Gastrocnemius medialis (tissue), 4 donors: ENCODE measurements at regions of chr5 and their contacts with region 1.

Region 1: GRCh38 chr5:54703133-54703532 is 185.6 kb downstream of the SNX18 start:
- DNase-seq: peak; percentile 17 to 49
- ATAC-seq: peak; percentile 79 to 80
- H3K4me3 ChIP-seq: no peak overlapping the region
- H3K27ac ChIP-seq: peak overlapping the region in 1 of 4 donors; percentile 39
- H3K4me1 ChIP-seq: peaks cover 22 to 28% of the 10 kb centered on the region in 2 donors
- H3K27me3 ChIP-seq: no peaks in the 10 kb centered on the region
- CTCF ChIP-seq: no peak
- POLR2A ChIP-seq: no peak

Region 2: DNA sequence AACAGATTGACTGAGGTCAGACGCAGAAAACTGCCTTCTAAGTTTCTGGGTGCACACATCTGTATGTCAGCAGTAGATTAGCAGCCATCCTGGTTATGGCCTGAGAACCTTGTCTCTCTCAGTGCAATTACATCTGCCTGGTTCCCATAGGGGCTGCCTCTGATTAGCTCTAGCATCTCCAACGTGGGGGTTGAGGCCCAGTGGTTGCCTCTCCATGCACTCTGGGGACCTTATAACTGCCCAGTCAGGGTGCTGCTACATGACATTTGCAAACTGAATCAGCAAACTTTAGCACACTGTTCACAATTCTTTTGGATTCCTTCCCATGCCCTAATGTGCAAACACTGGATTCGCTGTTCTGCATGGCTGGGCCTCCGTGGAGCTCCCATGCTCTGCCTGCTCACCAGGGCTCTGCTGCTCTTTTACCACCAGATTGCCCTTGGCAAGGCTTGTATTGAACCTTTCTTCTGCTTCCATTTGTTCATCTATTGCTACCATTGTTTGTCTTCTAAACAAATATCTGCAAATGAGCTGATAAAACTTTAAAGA is 149.4 kb before region 1 on chr5:
- in situ Hi-C with region 1: no loop called
- intact Hi-C with region 1: no loop called
- DNase-seq: no peak
- ATAC-seq: no peak
- H3K4me3 ChIP-seq: no peak overlapping the region
- H3K27ac ChIP-seq: no peak overlapping the region
- H3K4me1 ChIP-seq: no peaks in the 10 kb centered on the region
- H3K27me3 ChIP-seq: no peaks in the 10 kb centered on the region
- CTCF ChIP-seq: no peak
- POLR2A ChIP-seq: no peak

Region 3: GRCh38 chr5:54651482-54652076 is 51.6 kb before region 1 on chr5:
- in situ Hi-C with region 1: no loop called
- intact Hi-C with region 1: loop called (anchors 5 kb)
- DNase-seq: peak in 1 of 2 donors; percentile 38
- ATAC-seq: peak in 1 of 2 donors; percentile 31
- H3K4me3 ChIP-seq: no peak overlapping the region
- H3K27ac ChIP-seq: no peak overlapping the region
- H3K4me1 ChIP-seq: peaks cover 5 to 6% of the 10 kb centered on the region in 2 donors
- H3K27me3 ChIP-seq: no peaks in the 10 kb centered on the region
- CTCF ChIP-seq: no peak
- POLR2A ChIP-seq: no peak